WTC11 (cell line): ENCODE measurements at regions of chr6 and their contacts with region 1.

Region 1: DNA sequence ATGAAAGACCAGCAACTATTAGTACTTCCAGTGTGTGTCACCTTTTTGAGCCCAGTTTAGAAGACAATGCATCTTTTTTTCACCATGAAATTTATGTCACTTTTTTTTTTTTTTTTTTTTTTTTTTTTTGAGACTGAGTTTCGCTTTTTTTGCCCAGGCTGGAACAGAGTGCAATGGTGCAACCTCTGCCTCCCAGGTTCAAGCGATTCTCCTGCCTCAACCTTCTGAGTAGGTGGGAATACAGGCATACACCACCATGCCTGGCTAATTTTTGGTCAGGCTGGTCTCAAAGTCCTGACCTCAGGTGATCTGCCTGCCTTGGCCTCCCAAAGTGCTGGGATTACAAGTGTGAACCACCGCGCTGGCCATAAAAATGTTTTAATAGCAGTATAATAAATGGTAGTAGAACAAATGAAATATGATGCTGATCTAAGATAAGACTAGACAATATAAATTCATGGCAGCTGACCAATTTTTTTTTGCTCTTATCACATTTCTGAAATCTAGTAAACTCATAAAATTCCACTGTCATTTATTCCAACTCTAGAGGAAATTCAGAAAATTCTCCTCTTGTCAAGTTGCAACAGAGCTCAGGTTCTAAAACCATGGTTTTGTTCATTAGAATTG is 21.3 kb downstream of the NHSL1 start:
- DNase-seq: no peak
- ATAC-seq: no peak
- H3K4me3 Mint-ChIP-seq: no peak overlapping the region
- H3K27ac Mint-ChIP-seq: peak overlapping the region; percentile 67
- H3K4me1 Mint-ChIP-seq: peaks cover 32% of the 10 kb centered on the region
- H3K27me3 Mint-ChIP-seq: no peaks in the 10 kb centered on the region
- CTCF ChIP-seq: no peak

Region 2: DNA sequence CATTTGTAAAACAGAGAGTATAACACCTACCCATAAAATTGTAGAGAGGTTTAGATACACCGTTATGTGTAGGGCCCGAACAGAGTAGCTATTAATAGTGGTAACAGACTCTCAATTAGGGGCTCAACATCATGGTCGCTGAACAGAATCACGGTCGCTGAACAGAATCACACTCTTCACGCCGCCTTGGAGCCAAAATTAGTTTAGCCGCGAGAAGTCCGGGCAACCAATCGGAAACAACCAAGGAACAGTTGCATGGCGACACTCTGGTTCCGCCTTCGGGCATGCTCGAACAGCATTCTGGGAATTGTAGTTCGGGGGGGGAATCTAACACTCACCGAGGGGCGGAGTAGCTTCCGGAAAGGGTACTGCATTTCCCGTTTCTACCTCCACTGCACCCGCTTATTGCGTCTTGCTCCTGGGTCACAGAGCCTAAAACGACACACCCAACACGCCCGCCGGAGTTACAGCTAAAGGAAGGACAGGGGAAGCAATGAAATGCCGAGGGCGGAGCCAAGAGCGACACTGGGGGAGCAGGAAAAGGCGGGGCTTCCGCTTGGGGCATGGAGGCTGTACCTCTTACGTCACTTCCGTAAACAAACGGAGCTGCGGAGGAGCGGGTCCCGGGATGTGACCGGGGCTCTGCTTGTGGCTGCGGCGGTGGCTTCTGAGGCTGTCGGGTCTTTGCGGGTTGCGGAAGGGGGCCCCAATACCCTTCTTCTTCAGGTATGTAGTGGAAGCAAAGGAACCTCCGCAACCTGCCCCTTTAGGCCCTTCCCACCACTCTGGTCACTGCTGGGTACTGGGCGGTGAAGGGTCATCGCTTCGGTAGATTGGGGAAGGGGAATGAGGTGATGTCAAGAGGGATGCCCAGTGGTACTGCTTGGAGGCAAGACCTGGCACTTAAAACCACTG is 295.4 kb after region 1 on chr6 and contains the start of gene CCDC28A:
- CTCF ChIA-PET with region 1: no interaction called
- POLR2A ChIA-PET with region 1: interaction called, 10 read pairs
- DNase-seq: peak; percentile 88
- ATAC-seq: peak; percentile 93
- H3K4me3 Mint-ChIP-seq: peak within 1 kb of the TSS; percentile 100
- H3K27ac Mint-ChIP-seq: peak within 1 kb of the TSS; percentile 100
- H3K4me1 Mint-ChIP-seq: peaks cover 13% of the 10 kb centered on the region
- H3K27me3 Mint-ChIP-seq: no peaks in the 10 kb centered on the region
- CTCF ChIP-seq: no peak
- total RNA-seq, gene CCDC28A: 8.7 to 10.7 TPM (median 10.6 TPM) in 3 replicates